Breast epithelium (tissue), 4 donors: ENCODE measurements at regions of chr10 and their contacts with region 1.

Region 1: GRCh38 chr10:5623081-5623748 is 43.2 kb downstream of the ASB13 start:
- DNase-seq: peak; percentile 76 to 91
- H3K4me3 ChIP-seq: peak overlapping the region in 1 of 3 donors; percentile 9
- H3K27ac ChIP-seq: peak overlapping the region; percentile 65 to 79
- H3K4me1 ChIP-seq: peaks cover 10 to 11% of the 10 kb centered on the region in 2 donors
- H3K27me3 ChIP-seq: no peaks in the 10 kb centered on the region
- CTCF ChIP-seq: peak; percentile 86 to 96 (median 93)
- POLR2A ChIP-seq: no peak

Region 2: GRCh38 chr10:4656576-4657182 is 966.5 kb before region 1 on chr10:
- intact Hi-C with region 1: loop called (anchors 5 kb)
- DNase-seq: peak in 1 of 2 donors; percentile 46
- H3K4me3 ChIP-seq: no peak overlapping the region
- H3K27ac ChIP-seq: no peak overlapping the region
- H3K4me1 ChIP-seq: no peaks in the 10 kb centered on the region
- H3K27me3 ChIP-seq: no peaks in the 10 kb centered on the region
- CTCF ChIP-seq: peak; percentile 84 to 96 (median 86)
- POLR2A ChIP-seq: no peak

Region 3: GRCh38 chr10:5446390-5446926 is 176.8 kb before region 1 on chr10:
- intact Hi-C with region 1: loop called (anchors 10 kb)
- DNase-seq: peak; percentile 84 to 90
- H3K4me3 ChIP-seq: peak overlapping the region; percentile 43 to 68 (median 57)
- H3K27ac ChIP-seq: peak overlapping the region; percentile 88 to 91
- H3K4me1 ChIP-seq: no peaks in the 10 kb centered on the region
- H3K27me3 ChIP-seq: no peaks in the 10 kb centered on the region
- CTCF ChIP-seq: no peak
- POLR2A ChIP-seq: peak; percentile 68